ENCODE measurements at regions of chr12 and their contacts with region 1.

Region 1: DNA sequence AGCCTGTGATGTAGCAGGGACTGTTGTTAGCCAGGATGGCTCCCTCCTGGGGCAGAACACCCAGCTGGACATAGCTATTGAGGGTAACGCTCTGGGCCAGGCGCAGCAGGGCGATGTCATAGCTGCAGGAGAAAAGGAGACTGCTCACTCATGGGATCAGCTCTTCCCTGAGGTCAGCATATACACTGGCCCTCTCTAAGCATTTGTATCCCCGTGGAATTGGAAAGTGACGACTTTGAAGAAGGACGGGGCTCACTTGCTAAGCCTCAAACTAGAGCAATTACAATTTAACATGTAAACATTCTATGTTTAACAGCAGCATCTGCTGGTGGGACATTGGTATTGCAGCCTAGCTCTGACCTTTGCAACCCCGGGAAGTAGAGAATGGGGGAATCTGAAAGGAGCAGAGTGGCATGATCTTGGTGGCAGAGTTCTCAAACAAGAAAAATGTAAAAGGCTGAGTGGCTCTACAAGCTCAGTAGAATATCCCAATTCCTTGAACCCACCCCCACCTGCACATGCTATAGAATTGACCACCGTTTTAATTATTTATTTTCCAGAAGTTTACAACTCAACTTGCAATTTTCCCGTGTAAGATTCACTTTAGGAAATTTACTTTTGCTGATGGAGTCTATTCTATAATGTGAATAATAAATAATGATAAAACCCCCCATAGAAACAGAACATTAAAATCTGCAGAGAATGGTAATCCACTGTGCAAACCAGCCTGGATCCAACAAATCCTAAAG is 5.0 kb downstream of the CELA1 start:
- DNase-seq: peak; percentile 64
- ATAC-seq: peak; percentile 96
- H3K4me3 ChIP-seq: no peak overlapping the region; the same call in 1 of the 2 replicates
- H3K27ac ChIP-seq: no peak overlapping the region
- H3K4me1 ChIP-seq: peaks cover 4% of the 10 kb centered on the region; the same call in 1 of the 2 replicates
- H3K27me3 ChIP-seq: no peaks in the 10 kb centered on the region; the same call in 1 of the 2 replicates
- CTCF ChIP-seq: peak; percentile 93
- POLR2A ChIP-seq: 0 out of 2 replicates have a peak, but pooled peaks have one; percentile 32
- RAD21 ChIP-seq: peak; percentile 91

Region 2: DNA sequence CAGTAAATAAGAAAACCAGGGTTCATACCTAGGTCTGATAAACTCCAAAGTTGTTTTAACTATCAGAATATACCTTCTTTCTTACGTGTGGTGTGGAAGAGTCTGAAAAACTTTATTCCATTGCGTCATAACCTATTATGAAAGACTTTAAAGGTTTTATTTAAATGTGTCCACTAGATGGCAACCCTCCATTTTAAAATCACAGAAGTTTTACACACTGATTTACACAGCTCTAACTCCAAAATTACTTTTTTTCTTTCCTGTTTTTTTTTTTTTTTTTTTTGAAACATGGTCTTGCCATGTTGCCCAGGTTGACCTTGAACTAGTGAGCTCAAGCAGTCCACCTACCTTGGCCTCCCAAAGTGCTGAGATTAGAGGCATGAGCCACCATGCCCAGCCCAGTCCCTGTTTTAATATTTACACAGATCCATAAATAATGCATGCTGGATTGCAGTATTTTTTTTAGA is 516.0 kb before region 1 on chr12:
- CTCF ChIA-PET with region 1: no interaction called
- POLR2A ChIA-PET with region 1: no interaction called
- dilution Hi-C with region 1: no loop called
- in situ Hi-C with region 1: loop called (anchors 10 kb)
- intact Hi-C with region 1: loop called (anchors 5 kb)
- DNase-seq: peak; percentile 83
- ATAC-seq: peak; percentile 79
- H3K4me3 ChIP-seq: no peak overlapping the region
- H3K27ac ChIP-seq: no peak overlapping the region
- H3K4me1 ChIP-seq: peaks cover 2% of the 10 kb centered on the region
- H3K27me3 ChIP-seq: no peaks in the 10 kb centered on the region
- CTCF ChIP-seq: peak; percentile 67
- POLR2A ChIP-seq: no peak
- RAD21 ChIP-seq: peak; percentile 67

Region 3: DNA sequence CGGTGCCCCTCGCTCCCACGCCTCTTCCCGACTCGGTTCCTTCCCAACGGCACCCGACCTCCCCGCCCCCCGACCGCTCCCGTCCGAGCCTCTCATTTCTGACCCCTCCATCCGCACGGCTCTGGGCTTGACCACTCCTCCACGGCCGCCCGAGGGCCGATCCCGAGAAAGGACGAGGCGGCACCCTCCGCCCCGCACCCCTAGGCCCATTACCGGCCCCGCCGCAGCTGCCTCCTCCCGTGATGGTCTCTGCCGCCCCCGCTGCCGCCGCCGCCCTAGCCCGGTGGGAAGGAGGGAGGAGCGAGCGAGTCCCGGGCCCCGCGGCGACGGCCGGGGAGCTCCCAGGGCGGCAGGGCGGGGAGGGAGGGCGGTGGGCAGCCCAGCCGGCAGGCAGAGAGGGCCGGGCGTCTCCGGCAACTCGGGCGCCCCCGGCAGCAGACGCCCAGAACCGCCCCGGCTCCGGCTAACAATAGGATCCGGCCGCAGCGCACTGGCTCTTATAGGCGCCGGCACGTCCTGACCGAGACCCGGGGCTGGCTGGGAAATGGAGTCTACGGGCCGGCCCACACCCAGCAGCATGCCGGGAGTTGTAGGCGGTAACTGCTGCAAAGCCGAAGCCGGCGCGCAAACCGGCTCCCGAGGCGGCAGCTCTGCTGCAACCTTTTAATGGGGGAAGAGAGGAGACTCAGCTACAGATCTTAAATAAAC is 258.2 kb before region 1 on chr12 and contains the start of gene CSRNP2:
- CTCF ChIA-PET with region 1: interaction called, 5 read pairs
- POLR2A ChIA-PET with region 1: no interaction called
- dilution Hi-C with region 1: no loop called
- in situ Hi-C with region 1: loop called (anchors 10 kb)
- intact Hi-C with region 1: loop called (anchors 10 kb)
- DNase-seq: peak; percentile 93
- ATAC-seq: peak; percentile 98
- H3K4me3 ChIP-seq: peak within 1 kb of the TSS; percentile 74
- H3K27ac ChIP-seq: peak within 1 kb of the TSS; percentile 66
- H3K4me1 ChIP-seq: peaks cover 2% of the 10 kb centered on the region; the same call in 1 of the 2 replicates
- H3K27me3 ChIP-seq: no peaks in the 10 kb centered on the region
- CTCF ChIP-seq: 0 out of 2 replicates have a peak, but pooled peaks have one; percentile 17
- POLR2A ChIP-seq: peak; percentile 100
- RAD21 ChIP-seq: no peak
- total RNA-seq, gene CSRNP2: 14.0 and 16.7 TPM in 2 replicates

Region 4: DNA sequence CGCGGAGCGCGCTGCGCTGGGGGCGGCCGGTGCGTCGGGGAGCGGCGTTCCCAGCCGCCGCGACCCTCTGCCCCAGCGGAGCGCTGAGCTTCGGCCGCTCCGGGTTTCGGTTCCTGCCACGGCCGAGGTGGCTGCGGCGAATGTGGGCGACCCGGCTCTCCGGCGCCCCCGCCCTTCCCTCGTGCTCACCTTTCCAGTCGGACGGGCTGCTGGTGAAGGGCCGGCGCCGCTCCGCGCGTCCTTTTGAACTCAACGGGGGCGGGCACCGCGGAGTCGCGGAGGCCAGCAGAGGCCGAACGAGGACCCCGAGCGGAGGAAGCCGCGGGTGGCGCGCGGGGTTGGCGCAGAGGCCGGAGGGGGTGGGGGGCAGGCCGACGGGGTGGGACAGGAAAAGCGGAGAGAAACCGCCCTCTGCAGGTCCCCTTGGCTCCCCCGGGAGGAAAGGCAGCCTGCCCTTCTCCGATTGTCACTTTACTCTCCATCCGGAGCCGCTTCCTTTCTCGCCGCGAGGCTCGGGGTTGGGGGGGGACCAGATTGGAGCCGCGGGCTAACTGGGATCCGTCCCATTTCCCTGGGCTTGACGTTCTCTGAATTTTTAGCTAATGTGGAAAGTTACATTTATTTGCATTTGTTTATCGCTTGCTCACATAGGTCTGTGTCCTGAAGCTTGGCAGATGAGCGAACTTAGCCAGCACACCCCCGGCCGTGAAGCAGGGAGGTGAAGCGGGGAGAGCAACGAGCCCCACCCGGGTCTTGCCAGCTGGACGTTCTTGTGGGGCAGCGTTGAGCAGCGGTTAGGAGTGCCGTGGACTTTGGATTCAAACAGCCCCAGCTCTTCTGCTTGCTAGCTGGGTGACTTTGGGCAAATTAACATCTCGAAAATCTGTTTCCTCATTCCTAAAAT is 71.1 kb before region 1 on chr12 and contains the start of gene SMAGP:
- CTCF ChIA-PET with region 1: interaction called, 19 read pairs
- POLR2A ChIA-PET with region 1: no interaction called
- dilution Hi-C with region 1: no loop called
- in situ Hi-C with region 1: no loop called
- intact Hi-C with region 1: loop called (anchors 1 kb)
- DNase-seq: peak; percentile 21
- ATAC-seq: peak; percentile 67
- H3K4me3 ChIP-seq: peak within 1 kb of the TSS; percentile 74
- H3K27ac ChIP-seq: peak within 1 kb of the TSS; percentile 53
- H3K4me1 ChIP-seq: peaks cover 3% of the 10 kb centered on the region; the same call in 1 of the 2 replicates
- H3K27me3 ChIP-seq: no peaks in the 10 kb centered on the region
- CTCF ChIP-seq: no peak
- POLR2A ChIP-seq: peak; percentile 33; the same call in 1 of the 2 replicates
- RAD21 ChIP-seq: no peak
- total RNA-seq, gene SMAGP: 12.2 and 15.6 TPM in 2 replicates

Region 5: DNA sequence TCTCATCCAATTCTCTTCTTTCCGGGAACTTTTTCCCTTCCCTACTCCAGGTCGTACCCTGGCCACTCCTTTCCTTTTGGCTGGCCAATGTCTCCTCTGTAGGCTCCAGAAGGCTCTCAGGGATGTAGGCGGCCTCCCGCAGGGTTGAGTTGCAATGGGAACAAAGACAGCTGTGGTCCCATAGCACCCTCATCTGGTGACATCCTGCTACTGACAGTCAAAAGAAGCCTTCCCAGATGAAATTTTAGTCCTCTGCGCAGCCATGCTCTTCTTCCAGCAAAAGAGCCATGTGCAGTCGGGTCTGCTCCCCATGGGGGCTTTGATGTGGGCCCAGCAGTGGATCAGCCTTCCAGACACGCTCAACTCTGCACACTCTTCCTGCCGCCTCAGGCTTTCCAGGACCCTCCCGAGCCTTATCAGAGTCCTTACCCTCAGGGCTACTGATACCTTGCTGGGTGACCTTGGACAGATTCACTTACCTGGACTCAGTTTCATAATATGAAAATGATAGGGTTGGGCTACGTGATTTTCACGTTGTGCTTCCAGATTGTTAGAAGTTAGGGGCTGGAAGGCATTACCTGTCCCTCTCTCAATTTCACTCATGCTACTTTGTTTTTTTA is 10.6 kb after region 1 on chr12:
- CTCF ChIA-PET with region 1: interaction called, 17 read pairs
- POLR2A ChIA-PET with region 1: no interaction called
- dilution Hi-C with region 1: no loop called
- in situ Hi-C with region 1: no loop called
- intact Hi-C with region 1: no loop called
- DNase-seq: peak; percentile 66
- ATAC-seq: peak; percentile 80
- H3K4me3 ChIP-seq: no peak overlapping the region
- H3K27ac ChIP-seq: no peak overlapping the region
- H3K4me1 ChIP-seq: peaks cover 2% of the 10 kb centered on the region; the same call in 1 of the 2 replicates
- H3K27me3 ChIP-seq: no peaks in the 10 kb centered on the region
- CTCF ChIP-seq: peak; percentile 86
- POLR2A ChIP-seq: no peak
- RAD21 ChIP-seq: peak; percentile 88

Region 6: GRCh38 chr12:51531978-51532497 is 190.6 kb after region 1 on chr12:
- CTCF ChIA-PET with region 1: no interaction called
- POLR2A ChIA-PET with region 1: no interaction called
- dilution Hi-C with region 1: no loop called
- in situ Hi-C with region 1: no loop called
- intact Hi-C with region 1: no loop called
- DNase-seq: peak; percentile 76
- ATAC-seq: peak; percentile 92
- H3K4me3 ChIP-seq: no peak overlapping the region
- H3K27ac ChIP-seq: no peak overlapping the region
- H3K4me1 ChIP-seq: peaks cover 5% of the 10 kb centered on the region; the same call in 1 of the 2 replicates
- H3K27me3 ChIP-seq: no peaks in the 10 kb centered on the region
- CTCF ChIP-seq: peak; percentile 89
- POLR2A ChIP-seq: no peak
- RAD21 ChIP-seq: peak; percentile 90